Left cardiac atrium (tissue), 4 donors: ENCODE measurements at regions of chr19 and their contacts with region 1.

Region 1: GRCh38 chr19:28710278-28710677 is 502.7 kb downstream of the UQCRFS1 start:
- DNase-seq: no peak
- ATAC-seq: no peak

Region 2: GRCh38 chr19:27974082-27974513 is 736.2 kb before region 1 on chr19:
- intact Hi-C with region 1: loop called in 1 of 2 experiments (anchors 5 kb)
- DNase-seq: peak; percentile 27
- ATAC-seq: peak in 1 of 2 donors; percentile 75

Region 3: DNA sequence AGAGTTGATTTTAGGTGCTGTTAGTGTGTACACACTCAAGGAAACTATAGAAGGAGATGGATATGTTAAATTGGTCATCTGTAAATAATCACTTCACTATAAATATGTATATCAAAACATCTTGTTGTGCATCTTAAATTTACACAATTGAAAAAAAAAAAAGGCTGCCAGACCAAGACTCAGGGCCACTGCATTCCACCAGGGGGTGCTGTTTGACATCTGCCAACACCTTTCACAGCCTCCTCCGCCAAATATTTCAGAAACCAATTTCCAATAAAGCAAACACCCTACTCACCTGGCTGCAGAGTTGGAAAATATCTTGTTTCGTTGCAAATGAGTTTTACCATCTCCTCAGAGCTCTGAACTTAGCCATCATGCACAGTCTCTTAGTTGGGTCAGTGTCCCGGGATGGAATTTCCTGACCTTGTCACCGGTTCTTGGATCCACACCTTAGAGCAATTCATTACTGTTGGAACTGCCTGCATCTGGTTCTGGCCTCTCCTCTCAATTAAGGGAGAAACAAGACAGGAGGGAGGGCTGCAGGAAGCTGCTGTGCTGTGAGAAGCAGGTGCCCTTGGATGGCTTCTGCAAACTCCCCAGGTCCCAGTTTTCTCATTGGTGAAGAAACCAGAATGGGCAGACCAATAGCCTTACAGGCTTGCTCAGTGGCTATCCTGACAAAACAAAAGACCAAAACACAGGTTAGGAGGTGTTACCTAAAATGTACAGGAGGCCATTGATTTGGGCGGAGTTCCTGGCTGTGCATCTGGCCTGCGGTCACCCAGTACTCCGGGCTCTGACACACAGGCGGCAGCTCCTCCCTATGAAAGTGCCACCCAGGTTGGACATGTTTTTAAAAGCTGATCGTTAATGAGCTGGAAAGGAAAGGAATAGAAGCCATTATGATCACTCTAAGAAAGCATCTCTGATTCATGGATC is 243.9 kb before region 1 on chr19:
- intact Hi-C with region 1: loop called (anchors 2 to 5 kb)
- DNase-seq: peak; percentile 58
- ATAC-seq: peak in 1 of 2 donors; percentile 38

Region 4: DNA sequence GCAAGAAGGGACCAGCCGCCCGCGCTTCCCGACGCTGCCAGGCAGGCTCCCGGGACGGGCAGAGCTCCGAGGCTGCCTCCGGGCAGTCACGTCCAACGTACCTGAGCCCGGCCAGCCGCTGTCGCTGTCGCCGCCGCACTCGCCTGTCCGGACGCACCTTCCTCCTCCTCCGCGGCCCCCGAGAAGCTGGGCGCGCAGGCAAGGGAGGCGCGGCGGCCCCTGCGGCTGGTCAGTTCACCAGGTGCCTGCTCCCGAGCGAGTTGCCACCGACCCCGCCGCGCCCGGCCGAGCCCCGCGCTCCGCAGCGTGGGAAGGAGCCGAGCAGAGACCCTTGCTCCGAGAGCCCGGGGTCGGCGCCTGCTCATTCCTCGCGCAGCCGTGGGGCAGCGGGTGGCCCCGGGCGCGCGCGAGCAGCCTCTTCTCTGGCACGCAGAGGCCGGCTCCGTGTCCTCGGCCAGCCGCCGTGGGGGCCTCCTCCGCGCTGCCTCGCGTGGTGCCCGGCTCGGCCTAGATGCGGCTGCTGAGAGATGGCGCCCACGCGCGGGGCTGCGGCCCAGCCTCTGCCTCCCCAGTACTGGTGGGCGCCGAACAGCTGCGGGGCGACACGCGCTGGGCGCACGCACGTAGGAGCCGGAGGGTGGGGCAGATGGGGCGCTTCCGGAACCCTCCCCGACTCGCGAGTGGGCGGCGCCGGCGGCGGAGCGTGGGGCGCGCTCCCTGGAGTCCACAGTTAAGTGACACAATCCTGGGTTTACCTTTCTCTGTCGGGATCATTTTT is 83.3 kb after region 1 on chr19:
- intact Hi-C with region 1: no loop called
- DNase-seq: no peak
- ATAC-seq: peak; percentile 73 to 79

Region 5: GRCh38 chr19:29294343-29294811 is 584.1 kb after region 1 on chr19:
- intact Hi-C with region 1: no loop called
- DNase-seq: no peak
- ATAC-seq: no peak

Region 6: GRCh38 chr19:29576761-29577648 is 866.7 kb after region 1 on chr19:
- intact Hi-C with region 1: no loop called
- DNase-seq: no peak
- ATAC-seq: no peak